Vagina (tissue), 2 donors: ENCODE measurements at regions of chr17 and their contacts with region 1.

Region 1: GRCh38 chr17:64679688-64680216 is 17.6 kb upstream of the SMURF2 start:
- DNase-seq: no peak
- H3K4me3 ChIP-seq: no peak overlapping the region
- H3K27ac ChIP-seq: no peak overlapping the region
- H3K4me1 ChIP-seq: no peaks in the 10 kb centered on the region
- H3K27me3 ChIP-seq: no peaks in the 10 kb centered on the region
- CTCF ChIP-seq: no peak
- POLR2A ChIP-seq: no peak

Region 2: GRCh38 chr17:64622931-64623654 is 56.7 kb before region 1 on chr17:
- intact Hi-C with region 1: no loop called
- DNase-seq: no peak
- H3K4me3 ChIP-seq: no peak overlapping the region
- H3K27ac ChIP-seq: no peak overlapping the region
- H3K4me1 ChIP-seq: peaks cover 31% of the 10 kb centered on the region
- H3K27me3 ChIP-seq: no peaks in the 10 kb centered on the region
- CTCF ChIP-seq: no peak
- POLR2A ChIP-seq: no peak

Region 3: GRCh38 chr17:64702815-64703214 is 23.1 kb after region 1 on chr17:
- intact Hi-C with region 1: loop called (anchors 1 kb)
- DNase-seq: no peak
- H3K4me3 ChIP-seq: no peak overlapping the region
- H3K27ac ChIP-seq: no peak overlapping the region
- H3K4me1 ChIP-seq: peaks cover 17% of the 10 kb centered on the region
- H3K27me3 ChIP-seq: no peaks in the 10 kb centered on the region
- CTCF ChIP-seq: no peak
- POLR2A ChIP-seq: no peak

Region 4: GRCh38 chr17:65173284-65173793 is 493.6 kb after region 1 on chr17:
- intact Hi-C with region 1: loop called (anchors 10 kb)
- DNase-seq: no peak
- H3K4me3 ChIP-seq: no peak overlapping the region
- H3K27ac ChIP-seq: no peak overlapping the region
- H3K4me1 ChIP-seq: no peaks in the 10 kb centered on the region
- H3K27me3 ChIP-seq: no peaks in the 10 kb centered on the region
- CTCF ChIP-seq: no peak
- POLR2A ChIP-seq: no peak